ENCODE measurements at regions of chr7 and their contacts with region 1.

Region 1: GRCh38 chr7:123154231-123154860 is 45.4 kb downstream of the SLC13A1 start:
- DNase-seq: peak in 2 of 9 donors; percentile 2 to 29
- ATAC-seq: peak; percentile 36
- H3K4me3 ChIP-seq: no peak overlapping the region
- H3K4me3 Mint-ChIP-seq: no peak overlapping the region
- H3K27ac ChIP-seq: no peak overlapping the region
- H3K27ac Mint-ChIP-seq: no peak overlapping the region
- H3K4me1 ChIP-seq: no peaks in the 10 kb centered on the region
- H3K4me1 Mint-ChIP-seq: no peaks in the 10 kb centered on the region
- H3K27me3 ChIP-seq: no peaks in the 10 kb centered on the region
- H3K27me3 Mint-ChIP-seq: no peaks in the 10 kb centered on the region

Region 2: GRCh38 chr7:122092964-122093797 is 1061.2 kb before region 1 on chr7:
- CTCF ChIA-PET with region 1: no interaction called
- POLR2A ChIA-PET with region 1: no interaction called
- intact Hi-C with region 1: loop called in 1 of 2 experiments (anchors 5 kb)
- DNase-seq: peak in 8 of 9 donors; percentile 14 to 58 (median 46)
- ATAC-seq: peak; percentile 82
- H3K4me3 ChIP-seq: no peak overlapping the region
- H3K4me3 Mint-ChIP-seq: no peak overlapping the region
- H3K27ac ChIP-seq: no peak overlapping the region
- H3K27ac Mint-ChIP-seq: peak overlapping the region in 2 of 9 donors; percentile 8 to 13
- H3K4me1 ChIP-seq: no peaks in the 10 kb centered on the region
- H3K4me1 Mint-ChIP-seq: peaks cover 0 to 4% (median 0%) of the 10 kb centered on the region in 7 donors
- H3K27me3 ChIP-seq: no peaks in the 10 kb centered on the region
- H3K27me3 Mint-ChIP-seq: no peaks in the 10 kb centered on the region

Region 3: DNA sequence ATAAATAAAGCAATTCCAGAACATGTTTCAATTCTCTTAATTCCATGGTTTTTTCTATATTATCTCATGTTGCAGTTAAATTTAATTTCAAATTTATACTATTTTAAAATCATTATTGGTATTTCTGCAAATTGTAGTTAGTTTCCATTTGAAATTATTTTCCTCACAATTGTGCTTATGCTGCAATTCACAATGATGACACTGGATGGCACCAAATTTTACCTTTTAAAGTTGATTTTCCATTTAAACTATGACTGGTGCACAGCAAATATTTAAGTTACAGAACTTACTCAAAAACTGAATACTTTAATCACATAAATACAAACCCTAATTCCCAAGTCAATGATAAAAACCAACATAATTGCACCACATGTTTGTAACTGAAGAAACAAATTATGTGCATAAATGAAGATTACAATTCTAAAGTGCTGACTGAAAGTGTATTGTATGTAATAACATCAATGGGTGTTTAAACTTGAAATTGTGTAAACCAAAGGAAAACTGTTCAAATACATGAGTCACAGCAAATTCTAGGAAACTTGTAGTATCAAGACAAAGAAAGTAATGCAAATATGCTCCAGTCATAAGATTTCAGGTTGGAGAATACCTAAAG is 935.0 kb before region 1 on chr7:
- CTCF ChIA-PET with region 1: no interaction called
- POLR2A ChIA-PET with region 1: no interaction called
- intact Hi-C with region 1: loop called in 1 of 2 experiments (anchors 5 kb)
- DNase-seq: no peak
- ATAC-seq: no peak
- H3K4me3 ChIP-seq: no peak overlapping the region
- H3K4me3 Mint-ChIP-seq: no peak overlapping the region
- H3K27ac ChIP-seq: no peak overlapping the region
- H3K27ac Mint-ChIP-seq: no peak overlapping the region
- H3K4me1 ChIP-seq: no peaks in the 10 kb centered on the region
- H3K4me1 Mint-ChIP-seq: no peaks in the 10 kb centered on the region
- H3K27me3 ChIP-seq: no peaks in the 10 kb centered on the region
- H3K27me3 Mint-ChIP-seq: no peaks in the 10 kb centered on the region

Region 4: GRCh38 chr7:122803323-122803722 is 351.0 kb before region 1 on chr7:
- CTCF ChIA-PET with region 1: no interaction called
- POLR2A ChIA-PET with region 1: no interaction called
- intact Hi-C with region 1: loop called in 1 of 2 experiments (anchors 5 kb)
- DNase-seq: no peak
- ATAC-seq: no peak
- H3K4me3 ChIP-seq: no peak overlapping the region
- H3K4me3 Mint-ChIP-seq: no peak overlapping the region
- H3K27ac ChIP-seq: no peak overlapping the region
- H3K27ac Mint-ChIP-seq: no peak overlapping the region
- H3K4me1 ChIP-seq: no peaks in the 10 kb centered on the region
- H3K4me1 Mint-ChIP-seq: no peaks in the 10 kb centered on the region
- H3K27me3 ChIP-seq: no peaks in the 10 kb centered on the region
- H3K27me3 Mint-ChIP-seq: no peaks in the 10 kb centered on the region

Region 5: DNA sequence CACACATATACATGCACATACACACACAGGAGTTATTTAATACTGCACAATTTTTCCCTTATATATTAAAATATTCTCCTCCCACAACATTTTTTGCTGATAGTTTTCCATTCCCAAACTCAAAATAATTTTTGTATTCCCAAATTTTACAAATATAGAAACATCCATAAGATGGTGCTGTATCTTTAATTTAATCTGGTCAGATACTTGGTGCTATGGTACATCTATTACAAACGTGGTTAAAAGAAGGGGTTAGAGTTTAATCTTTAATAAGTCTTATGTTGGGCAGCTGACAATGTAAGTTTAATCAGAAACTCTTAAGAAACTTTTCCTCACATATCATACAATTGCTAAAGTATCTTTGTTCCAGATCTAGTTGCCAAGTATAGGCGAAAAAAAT is 257.8 kb before region 1 on chr7:
- CTCF ChIA-PET with region 1: no interaction called
- POLR2A ChIA-PET with region 1: no interaction called
- intact Hi-C with region 1: loop called in 1 of 2 experiments (anchors 10 kb)
- DNase-seq: no peak
- ATAC-seq: no peak
- H3K4me3 ChIP-seq: no peak overlapping the region
- H3K4me3 Mint-ChIP-seq: no peak overlapping the region
- H3K27ac ChIP-seq: no peak overlapping the region
- H3K27ac Mint-ChIP-seq: no peak overlapping the region
- H3K4me1 ChIP-seq: no peaks in the 10 kb centered on the region
- H3K4me1 Mint-ChIP-seq: no peaks in the 10 kb centered on the region
- H3K27me3 ChIP-seq: no peaks in the 10 kb centered on the region
- H3K27me3 Mint-ChIP-seq: no peaks in the 10 kb centered on the region